ENCODE measurements at regions of chrX and their contacts with region 1.

Region 1: DNA sequence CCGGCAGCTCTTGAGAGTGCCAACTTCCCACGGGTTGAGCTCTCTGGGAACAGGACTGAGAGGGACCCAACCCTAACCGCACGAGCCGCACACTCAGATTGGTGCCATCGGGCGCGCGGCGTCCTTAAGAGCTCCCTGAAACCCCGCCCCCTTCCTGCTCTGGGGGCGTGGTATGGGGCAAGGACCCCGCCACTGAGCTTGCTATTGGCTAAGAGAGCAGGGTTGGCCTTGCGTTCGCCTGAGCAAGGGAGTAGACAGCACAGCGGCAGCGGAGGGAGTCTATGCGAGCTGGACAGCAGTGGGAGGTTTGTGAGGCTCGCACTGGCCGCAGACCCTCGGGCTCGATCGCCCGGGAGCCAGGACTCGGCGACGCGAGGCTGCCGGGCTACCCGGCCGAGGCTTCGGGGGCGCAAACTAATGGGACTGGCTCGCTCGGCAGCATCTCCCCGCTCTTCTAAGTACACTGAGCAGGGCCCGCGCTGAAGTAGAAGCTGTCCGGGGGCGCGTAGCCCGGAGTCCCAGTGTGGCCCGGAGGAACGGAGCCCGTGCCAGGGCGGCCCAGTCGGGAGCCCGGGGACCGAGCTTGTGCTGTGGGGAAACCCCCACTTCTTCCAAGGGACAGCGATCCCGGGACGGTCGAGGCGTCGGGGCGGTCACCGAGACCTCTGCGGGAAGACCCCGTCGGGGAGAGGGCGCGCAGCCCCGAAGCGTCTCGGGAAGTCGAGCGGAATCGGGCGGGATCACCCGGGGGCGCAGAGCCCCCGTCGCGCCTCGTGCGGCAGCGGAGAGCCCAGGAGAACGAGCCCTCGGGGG is at the start of gene EFNB1:
- DNase-seq: peak; percentile 89 to 96 (median 93)
- H3K4me3 ChIP-seq: peak within 1 kb of the TSS in 3 of 4 donors; percentile 3 to 62 (median 57)
- H3K27ac ChIP-seq: peak within 1 kb of the TSS in 4 of 5 donors; percentile 54 to 83 (median 66)
- H3K4me1 ChIP-seq: no peaks in the 10 kb centered on the region
- H3K27me3 ChIP-seq: peaks cover 7% of the 10 kb centered on the region
- CTCF ChIP-seq: no peak
- POLR2A ChIP-seq: peak; percentile 84 to 97
- total RNA-seq, gene EFNB1: 32.2 to 66.5 (median 40.7) TPM

Region 2: GRCh38 chrX:68693481-68694434 is 135.2 kb before region 1 on chrX:
- intact Hi-C with region 1: no loop called
- DNase-seq: peak; percentile 68 to 85 (median 79)
- H3K4me3 ChIP-seq: peak overlapping the region in 2 of 4 donors; percentile 40 to 53
- H3K27ac ChIP-seq: peak overlapping the region in 4 of 5 donors; percentile 37 to 84 (median 54)
- H3K4me1 ChIP-seq: peaks cover 0 to 3% of the 10 kb centered on the region in 2 donors
- H3K27me3 ChIP-seq: no peaks in the 10 kb centered on the region
- CTCF ChIP-seq: no peak
- POLR2A ChIP-seq: peak; percentile 55 to 65

Region 3: GRCh38 chrX:68922042-68922441 is 93.1 kb after region 1 on chrX:
- intact Hi-C with region 1: no loop called
- DNase-seq: no peak
- H3K4me3 ChIP-seq: no peak overlapping the region
- H3K27ac ChIP-seq: peak overlapping the region in 1 of 5 donors; percentile 68
- H3K4me1 ChIP-seq: no peaks in the 10 kb centered on the region
- H3K27me3 ChIP-seq: peaks cover 16% of the 10 kb centered on the region
- CTCF ChIP-seq: no peak
- POLR2A ChIP-seq: no peak

Region 4: DNA sequence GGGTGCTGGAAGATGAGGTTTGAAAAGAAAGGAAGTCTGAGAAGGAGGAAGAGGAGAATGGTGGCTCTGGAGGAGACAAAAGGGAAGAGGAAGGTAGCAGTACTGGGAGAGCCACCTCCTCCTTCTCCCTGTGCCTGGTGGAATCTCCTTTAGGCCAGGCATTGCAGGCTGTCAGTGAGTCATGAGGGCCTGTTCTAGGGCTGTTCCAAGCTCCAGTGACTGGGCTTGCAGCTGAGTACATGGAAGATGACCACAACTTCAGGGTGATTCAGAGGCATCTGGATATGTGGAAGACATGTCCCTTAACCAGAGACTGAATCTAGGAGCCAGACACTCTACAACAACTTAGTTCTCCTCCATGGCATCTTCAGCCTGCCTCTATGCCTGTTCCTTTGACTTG is 107.7 kb after region 1 on chrX:
- intact Hi-C with region 1: no loop called
- DNase-seq: peak; percentile 25 to 64 (median 58)
- H3K4me3 ChIP-seq: no peak overlapping the region
- H3K27ac ChIP-seq: peak overlapping the region in 2 of 5 donors; percentile 27 to 60
- H3K4me1 ChIP-seq: peaks cover 14 to 20% of the 10 kb centered on the region in 2 donors
- H3K27me3 ChIP-seq: no peaks in the 10 kb centered on the region
- CTCF ChIP-seq: no peak
- POLR2A ChIP-seq: no peak

Region 5: GRCh38 chrX:69060631-69061408 is 231.9 kb after region 1 on chrX:
- intact Hi-C with region 1: loop called (anchors 5 kb)
- DNase-seq: peak; percentile 32 to 66 (median 42)
- H3K4me3 ChIP-seq: no peak overlapping the region
- H3K27ac ChIP-seq: no peak overlapping the region
- H3K4me1 ChIP-seq: no peaks in the 10 kb centered on the region
- H3K27me3 ChIP-seq: peaks cover 14% of the 10 kb centered on the region
- CTCF ChIP-seq: peak in 5 of 6 experiments; percentile 23 to 52 (median 39)
- POLR2A ChIP-seq: no peak

Region 6: GRCh38 chrX:69222103-69223090 is 393.5 kb after region 1 on chrX:
- intact Hi-C with region 1: loop called (anchors 2 to 5 kb)
- DNase-seq: peak; percentile 48 to 76 (median 68)
- H3K4me3 ChIP-seq: no peak overlapping the region
- H3K27ac ChIP-seq: no peak overlapping the region
- H3K4me1 ChIP-seq: no peaks in the 10 kb centered on the region
- H3K27me3 ChIP-seq: peaks cover 22% of the 10 kb centered on the region
- CTCF ChIP-seq: peak; percentile 61 to 87 (median 72)
- POLR2A ChIP-seq: no peak

Region 7: DNA sequence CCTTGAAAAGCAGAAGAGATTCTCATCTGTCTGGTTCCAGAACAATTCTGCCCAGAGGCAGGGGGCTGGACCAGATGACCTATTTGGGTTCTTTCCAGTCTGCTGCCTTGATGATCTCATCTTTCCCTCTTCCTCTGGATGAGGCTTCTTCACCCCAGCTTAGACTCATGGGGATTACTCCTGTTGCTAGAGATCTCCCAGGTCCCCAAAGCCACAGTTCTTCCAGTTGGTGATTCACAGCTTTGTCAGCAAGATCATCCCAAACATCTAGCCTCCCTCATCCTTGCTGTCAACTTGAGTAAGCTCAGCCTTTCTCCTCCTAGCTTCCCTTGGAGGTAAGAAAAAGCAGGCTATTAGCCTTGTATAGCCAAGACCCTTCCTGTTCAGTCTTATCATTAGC is 400.5 kb after region 1 on chrX:
- intact Hi-C with region 1: loop called in 1 of 2 experiments (anchors 5 kb)
- DNase-seq: no peak
- H3K4me3 ChIP-seq: no peak overlapping the region
- H3K27ac ChIP-seq: no peak overlapping the region
- H3K4me1 ChIP-seq: no peaks in the 10 kb centered on the region
- H3K27me3 ChIP-seq: peaks cover 20% of the 10 kb centered on the region
- CTCF ChIP-seq: no peak
- POLR2A ChIP-seq: no peak

Region 8: DNA sequence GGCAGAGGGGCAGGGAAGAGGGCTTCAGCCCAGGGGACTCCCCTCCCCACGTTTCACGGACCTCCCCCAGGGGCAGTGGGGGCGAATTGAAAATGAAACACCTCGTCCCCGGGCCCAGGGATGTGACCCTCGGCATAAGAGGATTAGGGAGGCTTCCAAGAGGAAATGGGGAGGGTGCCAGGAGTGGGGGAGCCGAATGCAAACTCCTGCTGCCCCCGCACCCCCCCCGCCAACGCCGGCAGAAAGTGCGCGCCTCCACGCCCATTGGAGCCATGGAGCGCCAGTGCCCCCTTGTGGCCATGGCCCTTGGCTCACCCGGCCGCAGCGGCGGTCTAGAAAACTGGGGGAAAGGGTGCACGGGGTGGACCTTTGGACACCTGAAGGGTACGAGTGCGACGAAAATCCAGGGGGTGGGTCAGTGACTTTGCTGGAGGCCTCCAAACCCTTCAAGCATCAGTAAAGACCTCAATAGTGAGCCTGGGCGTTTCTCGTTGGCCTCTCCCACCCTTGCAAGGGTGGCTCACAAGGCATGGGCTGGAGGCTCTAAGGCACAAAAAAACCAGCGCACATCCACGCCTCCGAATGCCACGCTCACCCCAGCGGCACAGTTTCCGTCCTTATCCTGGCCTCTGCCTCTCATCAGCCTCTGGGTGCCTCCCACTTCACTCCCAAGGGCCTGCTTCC is 457.1 kb after region 1 on chrX:
- intact Hi-C with region 1: loop called (anchors 5 kb)
- DNase-seq: peak; percentile 33 to 67 (median 60)
- H3K4me3 ChIP-seq: peak overlapping the region in 2 of 4 donors; percentile 19 to 35
- H3K27ac ChIP-seq: peak overlapping the region in 1 of 5 donors; percentile 48
- H3K4me1 ChIP-seq: peaks cover 0 to 8% of the 10 kb centered on the region in 2 donors
- H3K27me3 ChIP-seq: peaks cover 34% of the 10 kb centered on the region
- CTCF ChIP-seq: peak; percentile 62 to 83 (median 78)
- POLR2A ChIP-seq: no peak